ENCODE measurements at regions of chr3 and their contacts with region 1.

Region 1: DNA sequence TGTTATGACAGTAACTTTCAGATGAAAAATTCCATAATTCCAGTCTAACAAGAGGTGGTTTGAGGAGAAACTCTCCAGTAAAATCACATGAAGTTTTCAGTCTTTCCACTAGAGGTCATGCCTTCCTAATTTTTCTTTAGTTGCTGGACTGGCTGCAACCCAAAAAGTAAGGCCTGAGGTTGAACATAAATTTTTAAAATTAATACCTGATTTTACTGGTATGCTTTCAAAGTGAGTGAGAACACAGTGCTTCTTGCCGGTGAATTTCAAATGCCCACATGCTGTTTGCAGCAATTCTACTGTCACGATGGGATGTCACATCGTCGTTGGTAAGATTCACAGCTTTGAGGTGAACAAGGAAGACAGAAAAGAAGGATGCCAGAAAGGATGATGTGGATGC is 89.0 kb upstream of the FGF12 start:
- DNase-seq: peak in 8 of 42 donors; percentile 11 to 67 (median 32)

Region 2: DNA sequence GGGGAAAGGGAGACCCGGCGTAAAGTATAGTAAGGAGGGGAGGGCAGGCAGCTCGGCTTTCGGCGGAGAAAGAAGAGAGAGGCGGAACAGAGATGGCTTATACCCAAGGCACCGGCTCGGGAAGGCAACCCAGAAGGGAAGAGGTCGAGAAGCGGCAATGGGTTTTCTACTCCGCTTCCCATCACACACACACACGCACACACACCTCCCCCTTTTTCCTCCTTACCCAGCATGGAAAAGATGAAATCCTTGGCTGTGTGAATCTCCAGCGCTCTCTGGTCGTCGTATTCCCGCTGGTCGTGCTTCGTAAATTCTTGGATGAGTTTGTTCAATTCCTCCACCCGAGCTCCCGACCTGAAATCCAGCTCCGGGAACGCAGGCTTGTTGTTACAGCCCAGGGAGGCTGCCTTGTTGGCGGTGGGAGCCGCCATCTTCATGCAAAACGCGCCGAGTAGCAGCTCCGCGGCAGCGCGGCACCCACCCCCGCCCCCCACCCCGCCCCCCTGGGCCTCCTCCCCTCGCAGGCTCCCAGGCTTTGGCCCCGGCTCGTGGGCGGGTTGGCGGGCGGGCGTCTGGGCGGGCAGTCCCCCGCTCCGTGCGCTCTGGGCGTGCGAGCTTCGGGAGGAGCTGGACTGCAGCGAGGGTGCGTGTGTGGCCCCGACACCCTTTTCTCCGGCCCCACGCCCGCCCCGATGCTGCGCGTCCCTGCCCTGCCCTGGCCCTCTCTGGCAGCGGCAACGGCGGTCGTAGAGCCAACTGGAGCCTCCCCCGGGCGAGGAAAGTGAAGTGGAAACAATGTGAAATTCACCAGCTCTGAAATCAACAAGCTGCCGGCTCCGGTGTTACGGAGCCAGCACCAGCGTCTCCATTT is 101.3 kb after region 1 on chr3 and contains the start of gene MB21D2:
- intact Hi-C with region 1: loop called (anchors 10 kb)
- DNase-seq: peak; percentile 40 to 88 (median 76)

Region 3: DNA sequence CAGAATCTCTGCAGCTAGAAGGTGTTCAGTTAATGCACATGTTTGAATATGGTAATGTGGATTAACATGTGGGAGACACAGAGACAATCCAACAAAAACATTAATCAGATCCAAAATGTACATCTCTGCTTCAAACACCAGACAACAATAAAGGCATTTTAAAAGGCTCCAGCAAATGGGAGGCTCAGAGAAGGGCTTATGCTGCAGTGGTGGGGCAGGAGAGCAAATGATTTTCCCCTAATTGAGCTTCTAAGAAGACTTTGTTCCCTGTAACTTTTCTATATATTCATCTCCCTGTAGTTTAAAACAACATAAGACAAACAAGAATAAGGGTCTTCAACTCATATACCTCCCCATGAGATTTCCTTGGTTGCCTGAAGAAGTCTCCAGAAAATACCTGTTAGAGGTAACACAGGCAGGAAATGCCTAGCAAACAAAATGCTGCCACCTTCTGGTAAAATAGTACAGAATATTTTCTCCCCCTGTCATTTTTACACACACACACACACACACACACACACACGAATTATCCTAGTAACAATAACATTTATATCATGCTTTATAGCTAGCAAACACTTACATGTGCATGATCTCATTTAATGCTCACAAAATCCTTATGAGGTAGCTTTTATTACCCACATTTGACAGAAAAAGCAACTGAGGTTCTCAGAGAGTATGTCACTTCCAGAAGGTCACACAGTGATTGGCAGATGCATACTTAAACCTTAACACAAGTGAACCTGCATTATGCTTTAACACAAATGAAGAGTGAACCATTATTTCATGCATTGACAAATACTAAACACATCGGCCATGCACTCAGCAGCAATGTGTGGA is 224.7 kb after region 1 on chr3:
- intact Hi-C with region 1: loop called (anchors 2 kb)
- DNase-seq: peak in 6 of 42 donors; percentile 4 to 41 (median 18)

Region 4: GRCh38 chr3:193572426-193572908 is 756.1 kb after region 1 on chr3:
- intact Hi-C with region 1: loop called (anchors 5 kb)
- DNase-seq: peak in 41 of 42 donors; percentile 50 to 89 (median 73)